Ascending aorta (tissue), 2 donors: ENCODE measurements at regions of chr9 and their contacts with region 1.

Region 1: DNA sequence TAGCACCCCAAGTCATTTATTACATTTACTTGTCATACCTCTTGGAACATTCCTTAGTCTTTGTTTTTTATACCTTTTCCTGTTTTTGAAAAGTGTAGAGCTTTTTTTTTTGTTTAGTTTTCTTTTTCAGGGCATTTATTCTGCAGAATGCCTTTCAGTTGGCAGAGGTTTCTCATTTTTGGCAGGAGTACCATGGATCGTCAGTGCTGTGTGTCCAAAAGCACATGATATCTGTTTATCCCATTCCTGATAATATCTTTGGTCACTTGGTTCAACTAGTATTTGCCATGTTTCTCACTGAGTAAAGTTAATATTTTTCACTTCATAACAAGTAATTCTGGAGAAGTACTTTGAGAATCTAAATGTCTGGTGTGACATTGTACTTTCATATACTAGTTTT is 10.7 kb downstream of the OGN start:
- DNase-seq: no peak
- H3K4me3 ChIP-seq: peak overlapping the region in 1 of 2 donors; percentile 46
- H3K27ac ChIP-seq: peak overlapping the region; percentile 47 to 83
- H3K4me1 ChIP-seq: peaks cover 3 to 16% of the 10 kb centered on the region in 2 donors
- H3K27me3 ChIP-seq: no peaks in the 10 kb centered on the region
- CTCF ChIP-seq: no peak

Region 2: DNA sequence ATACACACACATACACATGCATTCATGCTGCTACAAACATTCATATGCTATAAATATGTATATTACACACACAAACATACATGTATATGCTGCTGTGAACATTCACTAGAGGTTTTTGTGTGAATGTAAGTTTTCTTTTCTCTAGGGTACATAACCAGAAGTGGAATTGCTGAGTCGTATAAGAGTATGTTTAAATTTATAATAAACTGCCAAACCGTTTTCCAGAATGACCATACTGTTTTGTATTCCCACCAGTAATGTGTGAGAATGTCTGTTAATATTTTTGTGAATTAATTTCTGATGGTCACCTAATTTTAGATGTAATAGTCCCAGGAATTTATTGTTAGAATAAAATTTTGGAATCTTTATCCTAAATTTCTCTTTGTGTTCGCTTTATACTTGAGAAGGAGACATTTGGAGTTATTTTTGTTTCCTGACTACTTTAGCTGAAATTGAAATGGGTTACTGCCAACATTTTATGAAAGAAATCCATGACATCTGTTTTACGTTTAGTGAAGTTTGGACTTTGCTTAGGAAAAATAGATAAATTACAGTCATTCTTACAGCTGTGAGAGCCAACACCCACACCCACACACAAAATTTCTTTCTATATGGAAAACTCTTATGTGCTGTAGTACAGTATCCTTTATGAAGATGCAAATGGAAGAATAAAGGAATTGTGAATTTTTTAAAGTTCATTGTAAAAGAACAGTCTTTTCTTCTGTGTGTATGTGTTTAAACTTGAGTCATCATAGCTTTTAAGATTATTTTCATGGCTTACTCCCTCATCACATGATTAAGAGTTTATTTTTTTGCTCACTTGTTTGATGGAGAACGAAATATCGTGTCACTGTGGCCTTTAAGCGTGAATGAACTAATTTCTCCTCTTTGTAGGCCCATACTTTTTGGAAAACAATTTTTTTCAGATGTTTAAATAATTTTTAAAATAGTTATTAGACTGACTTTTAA is 43.6 kb before region 1 on chr9:
- intact Hi-C with region 1: loop called (anchors 5 kb)
- DNase-seq: no peak
- H3K4me3 ChIP-seq: peak overlapping the region in 1 of 2 donors; percentile 17
- H3K27ac ChIP-seq: peak overlapping the region; percentile 77 to 85
- H3K4me1 ChIP-seq: peaks cover 0 to 16% of the 10 kb centered on the region in 2 donors
- H3K27me3 ChIP-seq: no peaks in the 10 kb centered on the region
- CTCF ChIP-seq: no peak

Region 3: DNA sequence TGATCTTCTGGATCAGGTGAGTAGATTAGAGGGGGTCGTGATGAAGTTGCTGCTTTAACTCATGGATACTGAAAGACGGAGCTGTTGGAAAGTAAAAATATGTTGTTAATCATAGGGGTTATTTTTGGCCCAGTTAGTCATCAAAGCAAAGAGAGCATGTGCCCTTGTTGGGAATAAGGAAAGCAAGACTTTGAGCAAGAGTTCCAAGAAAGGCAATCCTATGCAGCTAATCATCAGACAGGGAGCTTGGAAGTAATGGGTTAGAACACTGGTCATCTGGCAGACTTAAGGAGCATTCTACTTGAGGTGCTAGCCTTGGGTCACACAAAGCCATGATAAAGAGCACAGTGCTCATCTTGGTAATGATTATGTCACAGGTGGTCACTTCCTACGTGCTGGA is 70.3 kb after region 1 on chr9:
- intact Hi-C with region 1: loop called (anchors 5 kb)
- DNase-seq: peak in 1 of 2 donors; percentile 73
- H3K4me3 ChIP-seq: no peak overlapping the region
- H3K27ac ChIP-seq: peak overlapping the region; percentile 94 to 95
- H3K4me1 ChIP-seq: peaks cover 3 to 22% of the 10 kb centered on the region in 2 donors
- H3K27me3 ChIP-seq: no peaks in the 10 kb centered on the region
- CTCF ChIP-seq: no peak